Ovary (tissue), 10 donors: ENCODE measurements at regions of chr14 and their contacts with region 1.

Region 1: GRCh38 chr14:40983574-40983973 is 623.1 kb upstream of the LRFN5 start:
- DNase-seq: no peak
- H3K4me3 ChIP-seq: no peak overlapping the region
- H3K27ac ChIP-seq: no peak overlapping the region
- H3K4me1 ChIP-seq: no peaks in the 10 kb centered on the region
- H3K27me3 ChIP-seq: no peaks in the 10 kb centered on the region
- CTCF ChIP-seq: no peak
- EP300 ChIP-seq: no peak
- POLR2A ChIP-seq: no peak

Region 2: GRCh38 chr14:39488600-39488999 is 1495.0 kb before region 1 on chr14:
- intact Hi-C with region 1: loop called in 1 of 4 experiments (anchors 5 kb)
- DNase-seq: no peak
- H3K4me3 ChIP-seq: no peak overlapping the region
- H3K27ac ChIP-seq: no peak overlapping the region
- H3K4me1 ChIP-seq: peaks cover 1% of the 10 kb centered on the region
- H3K27me3 ChIP-seq: no peaks in the 10 kb centered on the region
- CTCF ChIP-seq: no peak
- EP300 ChIP-seq: no peak
- POLR2A ChIP-seq: no peak